ENCODE measurements at regions of chr12 and their contacts with region 1.

Region 1: GRCh38 chr12:115916910-115917668 is 360.4 kb downstream of the MED13L start:
- DNase-seq: peak; percentile 53
- H3K4me3 ChIP-seq: peak overlapping the region in 2 of 3 experiments; percentile 31 to 32
- H3K27ac ChIP-seq: no peak overlapping the region
- H3K4me1 ChIP-seq: peaks cover 5% of the 10 kb centered on the region
- H3K27me3 ChIP-seq: no peaks in the 10 kb centered on the region
- CTCF ChIP-seq: peak; percentile 64 to 93

Region 2: GRCh38 chr12:113980537-113981337 is 1936.4 kb before region 1 on chr12:
- CTCF ChIA-PET with region 1: no interaction called
- dilution Hi-C with region 1: no loop called
- in situ Hi-C with region 1: loop called in 1 of 2 experiments (anchors 25 kb)
- intact Hi-C with region 1: loop called (anchors 1 kb)
- DNase-seq: peak; percentile 30
- H3K4me3 ChIP-seq: no peak overlapping the region
- H3K27ac ChIP-seq: no peak overlapping the region
- H3K4me1 ChIP-seq: no peaks in the 10 kb centered on the region
- H3K27me3 ChIP-seq: no peaks in the 10 kb centered on the region
- CTCF ChIP-seq: peak; percentile 99

Region 3: GRCh38 chr12:114649585-114649984 is 1267.5 kb before region 1 on chr12:
- CTCF ChIA-PET with region 1: no interaction called
- dilution Hi-C with region 1: no loop called
- in situ Hi-C with region 1: loop called in 1 of 2 experiments (anchors 10 kb)
- intact Hi-C with region 1: no loop called
- DNase-seq: no peak
- H3K4me3 ChIP-seq: no peak overlapping the region
- H3K27ac ChIP-seq: no peak overlapping the region
- H3K4me1 ChIP-seq: no peaks in the 10 kb centered on the region
- H3K27me3 ChIP-seq: peaks cover 2% of the 10 kb centered on the region
- CTCF ChIP-seq: no peak

Region 4: GRCh38 chr12:114668151-114668885 is 1248.8 kb before region 1 on chr12:
- CTCF ChIA-PET with region 1: no interaction called
- dilution Hi-C with region 1: no loop called
- in situ Hi-C with region 1: loop called in 1 of 2 experiments (anchors 5 kb)
- intact Hi-C with region 1: loop called (anchors 1 kb)
- DNase-seq: peak; percentile 91
- H3K4me3 ChIP-seq: peak overlapping the region; percentile 43 to 60 (median 48)
- H3K27ac ChIP-seq: peak overlapping the region; percentile 75
- H3K4me1 ChIP-seq: peaks cover 41% of the 10 kb centered on the region
- H3K27me3 ChIP-seq: no peaks in the 10 kb centered on the region
- CTCF ChIP-seq: peak; percentile 35 to 69

Region 5: DNA sequence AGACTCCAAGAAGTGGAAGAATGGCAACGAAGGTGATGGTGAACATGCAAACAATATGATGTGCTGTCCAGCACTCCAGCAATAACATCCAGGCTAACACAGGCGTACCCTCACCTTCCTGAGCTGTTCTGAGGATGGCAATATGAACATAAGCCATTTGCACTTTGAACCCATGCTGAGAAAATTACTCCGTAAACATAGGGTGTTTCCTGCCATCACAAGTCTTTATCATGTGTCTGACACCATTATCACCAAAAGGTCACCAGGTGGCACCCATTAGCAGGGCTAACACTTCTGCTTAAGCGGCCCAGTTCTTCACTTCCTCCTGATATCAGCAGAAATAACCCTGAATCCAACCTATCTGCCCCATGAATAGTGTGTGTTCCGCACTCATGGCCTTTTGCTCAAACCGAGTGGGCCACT is 122.4 kb before region 1 on chr12:
- CTCF ChIA-PET with region 1: no interaction called
- dilution Hi-C with region 1: no loop called
- in situ Hi-C with region 1: no loop called
- intact Hi-C with region 1: loop called (anchors 10 kb)
- DNase-seq: no peak
- H3K4me3 ChIP-seq: no peak overlapping the region
- H3K27ac ChIP-seq: no peak overlapping the region
- H3K4me1 ChIP-seq: no peaks in the 10 kb centered on the region
- H3K27me3 ChIP-seq: no peaks in the 10 kb centered on the region
- CTCF ChIP-seq: no peak

Measured in mammary epithelial cell (primary cell).